Activated CD4-positive, alpha-beta memory T cell treated with anti-CD3 and anti-CD28 coated beads, Interleukin-2, amount 10 ng/mL, durations not matched to agents 7 days and 5 days (primary cell): ENCODE measurements at regions of chr14 and their contacts with region 1.

Region 1: DNA sequence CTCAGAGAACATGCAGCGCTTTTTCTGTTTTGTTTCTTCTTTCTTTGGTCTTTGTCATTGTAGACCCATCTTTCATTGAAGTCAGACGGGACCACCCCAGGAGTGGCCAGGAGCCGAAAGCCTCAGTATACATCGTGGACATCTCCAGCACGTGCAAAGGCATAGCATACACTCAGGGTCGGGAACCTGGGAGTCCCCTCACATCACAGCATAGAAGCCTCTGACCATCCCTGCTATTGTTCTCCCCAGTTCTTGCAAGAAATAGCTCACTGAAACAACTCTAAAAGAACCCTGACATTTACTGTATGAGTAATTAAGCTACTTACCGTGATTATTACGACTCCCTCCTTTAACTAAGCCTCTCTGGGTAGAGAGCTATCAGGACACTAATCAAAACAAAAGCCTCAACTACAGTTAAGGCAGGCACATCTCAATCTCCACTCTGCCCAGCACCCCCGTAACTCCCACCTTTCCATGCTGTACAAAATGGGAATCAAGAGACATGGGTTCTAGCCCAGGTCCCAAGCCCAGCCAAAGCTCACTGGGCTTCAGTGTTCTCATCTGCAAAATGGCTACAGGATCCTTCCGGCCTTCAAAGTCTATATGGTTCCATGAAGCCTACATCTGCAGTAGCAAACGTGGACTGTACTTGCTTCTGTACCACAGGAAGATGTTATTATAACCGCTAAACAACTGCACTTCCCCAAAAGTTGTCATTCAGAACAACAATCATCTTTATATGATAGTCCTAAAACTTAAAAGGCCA is 6.7 kb downstream of the CCDC88C start:
- DNase-seq: peak; percentile 41
- H3K4me3 Mint-ChIP-seq: peak overlapping the region; percentile 69
- H3K27ac Mint-ChIP-seq: peak overlapping the region; percentile 92
- H3K4me1 Mint-ChIP-seq: peaks cover 89% of the 10 kb centered on the region
- H3K27me3 Mint-ChIP-seq: no peaks in the 10 kb centered on the region

Region 2: DNA sequence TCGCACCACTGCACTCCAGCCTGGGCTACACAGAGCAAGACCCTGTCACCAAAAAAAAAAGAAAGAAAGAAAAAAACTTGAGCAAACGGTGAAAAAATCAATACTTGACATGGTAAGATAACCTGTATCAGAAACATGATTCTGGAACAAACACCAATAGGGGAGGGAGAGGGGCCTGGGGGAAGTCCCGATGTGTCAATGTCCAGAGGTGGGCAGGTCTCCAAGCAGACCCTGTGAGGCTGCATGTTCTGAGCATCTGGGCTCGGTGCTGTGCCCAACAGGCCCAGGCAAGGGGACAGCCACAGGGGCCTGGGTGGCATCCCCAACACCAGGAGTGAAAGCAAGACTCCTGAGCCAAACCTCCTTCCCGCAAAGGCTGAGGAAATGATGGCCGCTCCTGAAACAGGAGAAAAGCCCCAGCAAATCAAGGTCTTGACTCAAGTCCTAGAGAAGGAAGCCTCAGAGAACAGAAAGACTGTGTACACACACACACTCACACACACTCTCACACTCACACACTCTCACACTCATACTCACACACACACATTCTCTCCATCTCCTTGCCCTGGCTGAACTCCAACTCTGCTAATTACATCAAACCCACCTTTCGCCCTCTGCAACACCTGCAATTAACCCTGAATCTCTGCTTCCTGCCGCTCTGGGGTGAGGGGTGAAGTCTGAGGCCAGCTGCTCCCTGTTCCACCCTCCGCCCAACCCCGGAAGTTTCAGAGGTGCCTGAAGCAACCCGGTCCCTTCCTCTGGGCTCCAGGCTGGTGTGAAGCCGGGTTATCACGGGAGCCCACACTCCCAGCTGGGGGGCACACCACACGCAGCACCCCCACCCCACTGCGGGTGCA is 13.8 kb before region 1 on chr14:
- CTCF ChIA-PET with region 1: interaction called, 35 read pairs
- POLR2A ChIA-PET with region 1: interaction called, 308 read pairs
- DNase-seq: peak; percentile 81
- H3K4me3 Mint-ChIP-seq: peak overlapping the region; percentile 68
- H3K27ac Mint-ChIP-seq: peak overlapping the region; percentile 85
- H3K4me1 Mint-ChIP-seq: peaks cover 95% of the 10 kb centered on the region
- H3K27me3 Mint-ChIP-seq: no peaks in the 10 kb centered on the region